Activated naive CD4-positive, alpha-beta T cell treated with anti-CD3 and anti-CD28 coated beads for 36 hours (primary cell): ENCODE measurements at regions of chr4 and their contacts with region 1.

Region 1: DNA sequence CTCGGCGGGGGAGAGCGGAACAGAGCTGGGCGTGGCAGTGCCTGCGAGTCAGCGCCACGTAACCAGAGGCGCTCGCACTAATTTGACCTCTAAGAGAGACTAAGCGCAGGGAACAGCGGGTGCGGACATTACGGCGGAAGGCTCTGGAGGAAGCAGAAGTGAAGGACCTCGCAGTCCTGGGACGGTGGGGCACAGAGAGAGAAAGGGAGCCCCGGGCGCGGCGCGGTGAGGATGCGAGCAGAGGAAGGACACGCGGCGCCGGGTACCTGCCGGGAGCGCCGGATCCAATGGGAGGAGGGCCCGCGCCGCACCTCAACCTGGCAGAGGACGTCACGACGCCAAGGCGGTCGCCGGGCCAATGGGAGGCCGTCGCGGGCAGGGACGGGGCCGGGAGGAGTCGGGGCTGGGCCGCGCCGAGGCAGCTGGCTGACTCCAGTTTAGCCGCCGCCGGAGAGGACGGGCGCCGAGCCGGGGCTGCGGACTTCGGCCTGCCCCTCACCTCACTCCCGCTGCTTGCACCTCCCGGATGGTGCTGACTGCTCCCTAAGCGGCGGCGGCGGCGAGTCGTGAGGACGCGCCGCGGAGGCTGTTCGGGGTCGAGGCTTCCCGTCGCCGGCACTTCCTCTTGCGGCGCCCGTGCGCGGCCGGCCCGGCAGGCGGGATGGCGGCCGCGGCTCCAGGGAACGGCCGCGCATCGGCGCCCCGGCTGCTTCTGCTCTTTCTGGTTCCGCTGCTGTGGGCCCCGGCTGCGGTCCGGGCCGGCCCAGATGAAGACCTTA is at the start of gene TMEM165:
- DNase-seq: peak; percentile 92
- H3K4me3 Mint-ChIP-seq: peak within 1 kb of the TSS; percentile 96
- H3K27ac Mint-ChIP-seq: peak within 1 kb of the TSS; percentile 89
- H3K4me1 Mint-ChIP-seq: peaks cover 39% of the 10 kb centered on the region
- H3K27me3 Mint-ChIP-seq: no peaks in the 10 kb centered on the region
- total RNA-seq, gene TMEM165: 39.1 to 40.6 TPM

Region 2: GRCh38 chr4:55435141-55435841 is 39.6 kb after region 1 on chr4:
- CTCF ChIA-PET with region 1: no interaction called
- intact Hi-C with region 1: loop called (anchors 1 kb)
- DNase-seq: peak; percentile 68
- H3K4me3 Mint-ChIP-seq: no peak overlapping the region
- H3K27ac Mint-ChIP-seq: peak overlapping the region; percentile 37
- H3K4me1 Mint-ChIP-seq: peaks cover 16% of the 10 kb centered on the region
- H3K27me3 Mint-ChIP-seq: no peaks in the 10 kb centered on the region

Region 3: GRCh38 chr4:55819634-55820033 is 423.9 kb after region 1 on chr4 and contains the start of gene EXOC1L:
- CTCF ChIA-PET with region 1: no interaction called
- intact Hi-C with region 1: no loop called
- DNase-seq: no peak
- H3K4me3 Mint-ChIP-seq: peak within 1 kb of the TSS; percentile 41
- H3K27ac Mint-ChIP-seq: no peak within 1 kb of the TSS
- H3K4me1 Mint-ChIP-seq: peaks cover 4% of the 10 kb centered on the region
- H3K27me3 Mint-ChIP-seq: peaks cover 17% of the 10 kb centered on the region
- total RNA-seq, gene EXOC1L: not detected